ENCODE measurements at regions of chr18 and their contacts with region 1.

Region 1: DNA sequence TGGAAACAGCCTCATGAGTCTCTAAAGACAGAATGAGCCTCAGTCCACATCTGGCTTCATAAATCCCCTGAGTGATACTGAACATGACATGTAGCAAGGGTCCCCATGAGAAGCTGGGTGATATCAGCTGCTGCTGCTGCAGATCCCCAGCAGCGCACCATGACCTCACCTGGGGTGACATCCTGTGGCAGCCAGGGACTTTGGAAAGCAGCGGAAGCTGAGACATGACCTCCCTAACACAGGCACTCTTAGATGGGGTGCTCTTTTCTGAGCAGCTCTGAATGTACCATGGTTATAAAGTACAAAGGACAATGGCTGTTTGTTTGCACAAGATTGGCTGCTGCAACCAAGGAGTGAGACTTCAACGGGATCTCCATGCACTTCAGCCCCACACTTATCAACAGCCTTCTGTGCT is 74.7 kb upstream of the TMEM200C start:
- DNase-seq: no peak
- H3K4me3 ChIP-seq: no peak overlapping the region
- H3K4me3 Mint-ChIP-seq: no peak overlapping the region
- H3K27ac ChIP-seq: no peak overlapping the region
- H3K27ac Mint-ChIP-seq: no peak overlapping the region
- H3K4me1 ChIP-seq: peaks cover 11 to 17% of the 10 kb centered on the region in 2 donors
- H3K4me1 Mint-ChIP-seq: peaks cover 24% of the 10 kb centered on the region
- H3K27me3 ChIP-seq: no peaks in the 10 kb centered on the region
- H3K27me3 Mint-ChIP-seq: peaks cover 0 to 3% (median 3%) of the 10 kb centered on the region in 3 donors
- CTCF ChIP-seq: no peak

Region 2: GRCh38 chr18:5900249-5900648 is 69.7 kb before region 1 on chr18:
- intact Hi-C with region 1: loop called in 1 of 2 experiments (anchors 10 kb)
- DNase-seq: no peak
- H3K4me3 ChIP-seq: no peak overlapping the region
- H3K4me3 Mint-ChIP-seq: no peak overlapping the region
- H3K27ac ChIP-seq: no peak overlapping the region
- H3K27ac Mint-ChIP-seq: no peak overlapping the region
- H3K4me1 ChIP-seq: peaks cover 0 to 2% of the 10 kb centered on the region in 2 donors
- H3K4me1 Mint-ChIP-seq: no peaks in the 10 kb centered on the region
- H3K27me3 ChIP-seq: peaks cover 57 to 61% of the 10 kb centered on the region in 2 donors
- H3K27me3 Mint-ChIP-seq: peaks cover 41 to 63% (median 45%) of the 10 kb centered on the region in 3 donors
- CTCF ChIP-seq: no peak

Region 3: DNA sequence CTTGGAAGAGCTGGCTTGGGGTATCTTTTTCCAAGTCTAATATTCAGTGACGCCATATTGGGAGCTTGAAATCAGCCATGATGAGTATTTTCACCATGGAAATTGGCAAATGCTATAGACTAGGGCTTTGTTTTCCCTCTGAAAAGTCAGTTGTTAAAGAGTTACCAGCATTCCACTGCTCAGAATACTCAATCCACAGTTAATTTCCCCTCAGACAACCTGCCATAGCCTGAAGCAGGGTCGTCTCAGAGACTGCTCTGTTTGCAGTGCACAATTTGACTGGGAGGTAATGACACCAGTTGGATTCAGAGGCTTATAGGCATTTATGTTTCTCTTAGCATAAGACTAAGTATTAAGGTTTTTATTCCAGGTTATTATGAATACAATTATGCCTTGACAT is 39.2 kb before region 1 on chr18:
- intact Hi-C with region 1: no loop called
- DNase-seq: no peak
- H3K4me3 ChIP-seq: no peak overlapping the region
- H3K4me3 Mint-ChIP-seq: no peak overlapping the region
- H3K27ac ChIP-seq: no peak overlapping the region
- H3K27ac Mint-ChIP-seq: no peak overlapping the region
- H3K4me1 ChIP-seq: no peaks in the 10 kb centered on the region
- H3K4me1 Mint-ChIP-seq: no peaks in the 10 kb centered on the region
- H3K27me3 ChIP-seq: no peaks in the 10 kb centered on the region
- H3K27me3 Mint-ChIP-seq: peaks cover 2 to 4% (median 3%) of the 10 kb centered on the region in 3 donors
- CTCF ChIP-seq: no peak

Region 4: GRCh38 chr18:6054256-6054842 is 84.4 kb after region 1 on chr18:
- intact Hi-C with region 1: no loop called
- DNase-seq: no peak
- H3K4me3 ChIP-seq: no peak overlapping the region
- H3K4me3 Mint-ChIP-seq: no peak overlapping the region
- H3K27ac ChIP-seq: no peak overlapping the region
- H3K27ac Mint-ChIP-seq: no peak overlapping the region
- H3K4me1 ChIP-seq: no peaks in the 10 kb centered on the region
- H3K4me1 Mint-ChIP-seq: peaks cover 3% of the 10 kb centered on the region
- H3K27me3 ChIP-seq: no peaks in the 10 kb centered on the region
- H3K27me3 Mint-ChIP-seq: no peaks in the 10 kb centered on the region
- CTCF ChIP-seq: no peak